ENCODE measurements at regions of chr1 and their contacts with region 1.

Region 1: DNA sequence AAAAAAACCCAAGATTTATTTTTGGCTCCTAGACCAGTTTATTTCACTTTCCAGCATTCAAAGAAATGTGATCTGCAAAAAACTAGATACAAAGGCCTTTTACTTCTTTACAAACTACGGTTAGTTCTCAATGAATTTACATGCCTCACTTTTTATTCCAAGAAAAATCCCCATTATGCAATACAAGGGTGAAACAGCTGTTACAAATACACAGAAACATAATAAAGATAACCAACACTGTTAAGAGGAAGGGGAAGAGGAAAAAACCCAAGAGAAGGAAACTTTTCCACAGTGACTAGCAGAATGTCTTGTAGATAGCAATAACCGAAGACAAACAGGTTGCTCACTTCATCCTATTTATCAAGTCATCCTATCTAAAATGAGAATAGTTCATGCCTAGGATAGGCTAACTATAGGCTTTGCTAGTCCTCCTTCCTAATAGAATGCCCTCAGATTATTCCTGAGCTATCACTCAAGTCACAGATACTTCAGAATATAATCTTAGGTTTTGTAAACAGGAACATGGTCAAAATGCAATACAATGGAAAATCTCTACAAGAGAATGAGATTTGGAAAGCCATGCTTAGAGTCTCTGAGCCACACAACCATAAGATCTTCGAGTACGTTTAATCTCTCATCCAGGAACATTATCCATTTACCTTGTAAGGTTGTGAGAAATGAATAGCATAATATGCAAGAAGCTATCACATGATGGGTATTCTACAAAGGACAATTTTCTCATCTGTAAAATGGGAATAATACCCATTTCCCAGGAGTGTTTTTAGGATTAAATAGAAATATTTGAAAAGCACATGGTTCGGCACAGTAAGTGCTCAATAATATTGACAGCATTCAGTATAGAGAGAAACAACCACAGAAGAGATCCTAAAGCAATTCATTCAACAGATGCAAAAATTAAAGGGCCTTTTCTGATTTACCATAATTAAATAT is 5.4 kb downstream of the PNRC2 start:
- DNase-seq: no peak
- H3K4me3 Mint-ChIP-seq: no peak overlapping the region
- H3K27ac Mint-ChIP-seq: peak overlapping the region; percentile 65
- H3K4me1 Mint-ChIP-seq: peaks cover 81% of the 10 kb centered on the region
- H3K27me3 Mint-ChIP-seq: no peaks in the 10 kb centered on the region

Region 2: GRCh38 chr1:23627069-23627735 is 337.9 kb before region 1 on chr1:
- intact Hi-C with region 1: no loop called
- DNase-seq: no peak
- H3K4me3 Mint-ChIP-seq: peak overlapping the region; percentile 84
- H3K27ac Mint-ChIP-seq: no peak overlapping the region
- H3K4me1 Mint-ChIP-seq: peaks cover 43% of the 10 kb centered on the region
- H3K27me3 Mint-ChIP-seq: peaks cover 2% of the 10 kb centered on the region

Region 3: DNA sequence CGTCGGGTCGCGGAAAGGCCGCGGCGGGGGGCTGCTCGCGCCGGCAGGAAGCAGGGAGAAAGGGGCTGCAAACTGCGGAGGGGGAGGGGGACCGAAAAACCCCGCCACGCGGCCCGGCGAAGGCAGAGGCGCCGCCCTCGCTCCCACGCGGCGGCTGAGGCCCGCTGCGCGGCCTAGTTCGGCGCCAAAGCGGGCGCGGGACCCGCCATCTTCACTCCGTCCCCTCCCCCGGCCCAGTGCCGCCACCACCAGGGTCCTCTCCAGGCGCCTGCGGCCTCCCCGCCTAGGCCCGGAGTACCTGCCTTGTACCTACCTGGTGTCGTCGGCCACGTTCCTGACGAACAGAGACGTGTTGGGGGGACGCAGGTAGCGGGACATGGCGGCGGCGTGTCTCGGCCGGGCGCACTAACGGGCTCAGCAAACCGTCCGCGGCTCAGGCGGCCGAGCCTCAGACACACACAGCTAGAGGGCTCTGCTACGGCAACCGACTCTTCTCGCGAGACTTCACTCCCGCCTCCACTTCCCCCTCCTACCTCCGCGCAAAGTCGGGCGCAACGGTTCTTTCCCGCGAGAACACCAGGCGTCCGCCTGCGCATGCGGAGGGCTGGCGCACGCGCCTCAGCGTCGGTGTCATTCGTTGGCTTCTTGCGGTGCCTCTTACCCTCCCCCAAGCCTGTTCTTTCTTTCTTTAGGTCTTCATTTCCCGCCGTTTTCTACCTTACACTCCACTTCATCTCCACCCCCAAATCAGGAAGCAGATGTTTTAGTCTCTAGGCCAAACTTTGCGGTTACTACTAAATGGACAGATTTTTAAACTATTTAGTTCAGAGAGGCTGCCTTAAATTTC is 15.0 kb after region 1 on chr1 and contains the start of gene SRSF10:
- intact Hi-C with region 1: loop called (anchors 1 kb)
- DNase-seq: peak; percentile 98
- H3K4me3 Mint-ChIP-seq: peak within 1 kb of the TSS; percentile 97
- H3K27ac Mint-ChIP-seq: peak within 1 kb of the TSS; percentile 97
- H3K4me1 Mint-ChIP-seq: peaks cover 47% of the 10 kb centered on the region
- H3K27me3 Mint-ChIP-seq: no peaks in the 10 kb centered on the region
- total RNA-seq, gene SRSF10: 238 and 243 TPM in 2 replicates

Measured in activated T-helper 1 cell treated with anti-CD3 and anti-CD28 coated beads, Interleukin-12 subunit alpha, Interleukin-12 subunit beta, Interleukin-2, Interleukin-4 antibody, amounts not matched to agents 30 ng/mL and 10 ng/mL and 1 ng/mL, durations not matched to agents 14 hours and 24 hours and 36 hours (primary cell).